Uterus (tissue), 4 donors: ENCODE measurements at regions of chr22 and their contacts with region 1.

Region 1: DNA sequence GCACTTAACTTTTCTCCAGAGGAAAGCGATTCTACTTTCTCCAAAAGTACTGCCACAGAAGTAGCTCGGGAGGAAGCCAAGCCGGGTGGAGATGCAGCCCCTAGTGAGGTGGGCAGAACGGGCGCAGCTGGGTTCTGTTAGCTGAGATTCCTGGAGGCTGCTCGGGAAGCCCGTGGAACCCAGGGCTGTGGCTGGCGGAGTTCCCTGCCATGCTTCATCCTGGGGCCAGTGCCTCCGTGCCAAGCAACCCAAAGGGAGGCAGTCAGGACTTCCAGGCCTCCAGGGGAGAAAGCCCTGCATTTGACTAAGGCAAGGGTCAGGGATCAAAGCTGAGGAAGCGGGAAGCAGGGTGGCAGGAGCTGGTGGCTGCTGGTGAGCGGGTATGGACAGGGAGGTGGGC is 6.7 kb upstream of the TRMU start:
- DNase-seq: no peak
- H3K4me3 ChIP-seq: no peak overlapping the region
- H3K27ac ChIP-seq: no peak overlapping the region
- H3K4me1 ChIP-seq: no peaks in the 10 kb centered on the region
- H3K27me3 ChIP-seq: no peaks in the 10 kb centered on the region
- CTCF ChIP-seq: no peak
- POLR2A ChIP-seq: no peak

Region 2: DNA sequence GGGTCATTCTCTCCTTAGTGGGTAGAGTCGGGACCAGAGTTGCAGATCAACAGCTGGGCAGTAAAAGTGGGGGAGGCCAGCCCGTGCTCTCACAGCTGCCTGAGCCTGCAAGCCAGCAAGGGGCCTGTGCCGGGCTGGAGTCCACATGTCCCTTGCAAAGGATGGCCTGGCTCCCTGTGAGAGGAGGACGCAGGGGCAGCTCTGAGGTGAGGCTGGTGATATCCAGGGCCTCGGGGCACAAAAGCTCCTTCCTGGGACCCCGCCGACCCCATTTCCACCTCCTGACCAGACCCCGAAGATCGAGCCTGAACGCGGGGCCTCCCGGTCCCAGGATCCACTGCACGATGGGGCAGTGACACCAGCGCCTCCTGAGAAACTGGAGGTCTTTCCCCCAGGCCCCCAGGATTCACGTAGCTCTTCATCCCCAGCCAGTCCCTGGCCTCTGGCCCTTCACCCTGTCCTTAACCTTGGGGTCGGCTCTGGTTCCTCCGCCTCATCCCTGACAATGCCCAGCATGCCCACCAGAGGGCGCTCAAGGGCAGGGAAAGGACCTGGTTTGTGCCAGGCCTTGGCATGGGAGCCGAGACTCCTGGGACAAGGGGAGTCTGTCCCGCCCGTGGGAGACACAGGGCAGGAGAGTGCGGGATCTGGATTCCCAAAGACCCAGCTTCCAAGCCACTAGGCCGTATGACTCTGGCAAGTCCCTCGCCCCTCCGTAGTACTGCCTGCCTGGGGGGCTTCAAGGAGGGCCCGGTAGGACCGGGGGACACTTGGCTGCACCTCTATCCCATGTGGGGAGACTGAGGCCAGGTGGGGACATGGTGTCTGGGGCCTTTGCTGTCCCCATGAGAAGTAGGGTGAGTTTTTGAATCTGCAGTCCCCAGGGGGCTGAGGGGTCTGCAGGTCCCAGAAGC is 334.0 kb before region 1 on chr22:
- intact Hi-C with region 1: loop called (anchors 10 kb)
- DNase-seq: peak; percentile 83 to 86
- H3K4me3 ChIP-seq: no peak overlapping the region
- H3K27ac ChIP-seq: peak overlapping the region in 1 of 2 donors; percentile 75
- H3K4me1 ChIP-seq: peaks cover 0 to 24% of the 10 kb centered on the region in 2 donors
- H3K27me3 ChIP-seq: no peaks in the 10 kb centered on the region
- CTCF ChIP-seq: peak; percentile 97 to 99 (median 98)
- POLR2A ChIP-seq: no peak

Region 3: GRCh38 chr22:46180370-46181137 is 148.2 kb before region 1 on chr22:
- intact Hi-C with region 1: no loop called
- DNase-seq: no peak
- H3K4me3 ChIP-seq: no peak overlapping the region
- H3K27ac ChIP-seq: no peak overlapping the region
- H3K4me1 ChIP-seq: no peaks in the 10 kb centered on the region
- H3K27me3 ChIP-seq: no peaks in the 10 kb centered on the region
- CTCF ChIP-seq: no peak
- POLR2A ChIP-seq: no peak

Region 4: GRCh38 chr22:46280999-46281623 is 47.7 kb before region 1 on chr22:
- intact Hi-C with region 1: no loop called
- DNase-seq: no peak
- H3K4me3 ChIP-seq: no peak overlapping the region
- H3K27ac ChIP-seq: no peak overlapping the region
- H3K4me1 ChIP-seq: no peaks in the 10 kb centered on the region
- H3K27me3 ChIP-seq: no peaks in the 10 kb centered on the region
- CTCF ChIP-seq: no peak
- POLR2A ChIP-seq: no peak